CD8-positive, alpha-beta T cell (primary cell): ENCODE measurements at regions of chr1 and their contacts with region 1.

Region 1: DNA sequence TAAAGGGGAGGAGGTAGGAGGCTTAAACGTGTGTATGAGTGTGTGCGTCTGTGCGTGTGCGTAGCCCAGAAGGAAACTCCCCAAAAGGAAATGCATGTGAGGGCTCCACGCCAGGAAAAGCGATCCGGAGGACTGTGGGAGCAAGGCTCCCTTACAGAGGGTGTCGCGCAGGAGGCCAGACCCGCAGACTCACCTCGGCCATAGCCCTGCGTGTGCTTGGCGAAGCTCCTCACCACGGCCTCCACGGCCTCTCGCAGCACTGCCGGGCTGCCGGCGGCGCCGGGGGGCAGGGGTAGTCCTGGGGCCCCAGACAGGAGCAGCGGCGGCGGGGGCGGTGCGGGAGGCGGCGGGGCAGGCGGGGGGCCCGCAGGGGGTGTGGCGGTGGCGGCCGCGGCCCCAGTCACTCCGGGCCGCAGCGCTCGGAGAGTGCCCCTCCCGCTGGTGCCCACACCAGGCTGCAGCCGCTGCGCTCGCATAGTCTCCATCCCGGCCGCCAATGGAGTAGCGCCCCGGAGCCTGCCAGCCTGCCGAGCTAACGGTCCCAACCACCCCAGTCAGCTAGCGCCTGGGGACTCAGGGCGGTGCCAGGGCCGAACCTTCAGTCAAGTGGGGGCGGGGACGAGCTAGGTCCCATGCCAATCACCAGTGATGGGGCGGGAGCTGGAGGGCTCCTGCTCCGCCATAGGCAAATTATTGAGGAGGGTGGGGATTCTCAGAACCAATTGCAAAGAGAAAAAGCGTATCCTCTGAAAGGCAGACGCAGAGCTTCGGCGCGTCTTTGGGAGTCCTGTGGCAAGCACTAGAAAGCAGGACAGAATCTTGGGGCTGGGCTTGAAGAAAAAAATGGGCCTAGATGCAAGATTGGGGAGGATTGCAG is at the start of gene LIX1L:
- DNase-seq: peak; percentile 87 to 98 (median 95)
- ATAC-seq: peak; percentile 85
- H3K4me3 ChIP-seq: peak within 1 kb of the TSS; percentile 51 to 65
- H3K4me3 Mint-ChIP-seq: peak within 1 kb of the TSS; percentile 93
- H3K27ac ChIP-seq: peak within 1 kb of the TSS; percentile 77 to 80
- H3K27ac Mint-ChIP-seq: peak within 1 kb of the TSS; percentile 98
- H3K4me1 ChIP-seq: peaks cover 57% of the 10 kb centered on the region
- H3K4me1 Mint-ChIP-seq: peaks cover 73% of the 10 kb centered on the region
- H3K27me3 ChIP-seq: no peaks in the 10 kb centered on the region
- H3K27me3 Mint-ChIP-seq: no peaks in the 10 kb centered on the region
- CTCF ChIP-seq: no peak
- total RNA-seq, gene LIX1L: 14.7 to 16.4 TPM

Region 2: DNA sequence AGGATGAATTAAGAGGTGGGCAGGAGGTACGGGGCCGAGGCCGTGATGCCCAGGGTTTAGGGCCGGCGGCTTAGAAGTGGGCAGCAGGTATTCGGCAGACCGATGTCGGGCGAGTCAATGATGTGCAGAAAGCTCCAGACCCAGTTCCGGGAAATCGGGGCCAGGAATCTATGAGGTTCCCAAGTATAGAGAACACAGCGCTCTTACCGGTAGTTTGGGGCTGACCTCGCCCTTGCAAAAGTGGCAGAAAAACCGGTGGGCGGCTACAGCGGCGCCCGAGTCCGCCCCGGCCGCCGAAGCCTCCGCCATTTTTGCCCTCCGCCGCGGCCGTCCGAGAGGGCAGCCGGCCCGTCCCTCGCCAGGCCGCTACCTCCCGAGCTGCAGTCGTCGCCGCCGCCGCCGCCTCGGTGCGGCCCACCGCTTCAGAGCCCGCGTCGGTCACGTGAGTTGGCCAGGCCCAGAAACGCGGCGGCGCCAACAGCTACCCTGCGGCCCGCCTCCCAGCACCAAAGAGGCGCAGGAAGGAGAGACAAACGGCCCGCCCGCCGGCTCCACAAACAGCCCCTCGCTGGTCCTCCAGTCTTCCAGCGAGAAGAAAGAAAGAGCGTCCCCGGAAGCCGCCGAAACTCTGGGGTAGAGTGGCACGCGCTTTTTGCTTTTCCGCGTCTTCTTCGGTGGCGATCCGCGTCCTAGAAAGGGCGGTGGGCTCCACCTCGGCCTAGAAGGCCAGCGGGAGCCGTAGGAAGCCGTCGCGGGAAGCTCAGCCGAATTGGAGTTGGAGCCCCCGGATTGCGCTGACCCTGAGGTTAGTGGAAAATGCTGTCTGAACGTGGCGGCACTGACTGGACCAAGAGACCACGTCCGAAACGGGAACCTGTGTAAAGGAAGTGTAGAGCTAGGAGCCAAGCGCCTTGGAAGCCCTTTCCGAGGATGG is 133.8 kb before region 1 on chr1 and contains the starts of genes POLR3C and RNF115:
- CTCF ChIA-PET with region 1: no interaction called
- POLR2A ChIA-PET with region 1: interaction called, 10 read pairs
- intact Hi-C with region 1: no loop called
- DNase-seq: peak; percentile 68 to 94 (median 88)
- ATAC-seq: peak; percentile 93
- H3K4me3 ChIP-seq: peak within 1 kb of the TSS; percentile 93 to 99
- H3K4me3 Mint-ChIP-seq: peak within 1 kb of the TSS; percentile 95
- H3K27ac ChIP-seq: peak within 1 kb of the TSS; percentile 77 to 89
- H3K27ac Mint-ChIP-seq: peak within 1 kb of the TSS; percentile 96
- H3K4me1 ChIP-seq: peaks cover 14% of the 10 kb centered on the region
- H3K4me1 Mint-ChIP-seq: peaks cover 35% of the 10 kb centered on the region
- H3K27me3 ChIP-seq: no peaks in the 10 kb centered on the region
- H3K27me3 Mint-ChIP-seq: no peaks in the 10 kb centered on the region
- CTCF ChIP-seq: no peak
- total RNA-seq, gene POLR3C: 22.1 to 25.8 TPM
- total RNA-seq, gene RNF115: 16.4 TPM

Region 3: GRCh38 chr1:145879775-145880174 is 77.9 kb before region 1 on chr1:
- CTCF ChIA-PET with region 1: no interaction called
- POLR2A ChIA-PET with region 1: no interaction called
- intact Hi-C with region 1: no loop called
- DNase-seq: no peak
- ATAC-seq: no peak
- H3K4me3 ChIP-seq: no peak overlapping the region
- H3K4me3 Mint-ChIP-seq: no peak overlapping the region
- H3K27ac ChIP-seq: no peak overlapping the region
- H3K27ac Mint-ChIP-seq: no peak overlapping the region
- H3K4me1 ChIP-seq: no peaks in the 10 kb centered on the region
- H3K4me1 Mint-ChIP-seq: peaks cover 2% of the 10 kb centered on the region
- H3K27me3 ChIP-seq: peaks cover 0 to 3% of the 10 kb centered on the region in 2 experiments
- H3K27me3 Mint-ChIP-seq: peaks cover 17% of the 10 kb centered on the region
- CTCF ChIP-seq: no peak

Region 4: GRCh38 chr1:145918144-145918992 is 39.3 kb before region 1 on chr1 and contains the start of gene PEX11B:
- CTCF ChIA-PET with region 1: interaction called, 3 read pairs
- POLR2A ChIA-PET with region 1: interaction called, 26 read pairs
- intact Hi-C with region 1: loop called in 1 of 2 experiments (anchors 2 kb)
- DNase-seq: peak; percentile 87 to 96 (median 93)
- ATAC-seq: peak; percentile 91
- H3K4me3 ChIP-seq: peak within 1 kb of the TSS; percentile 88 to 96
- H3K4me3 Mint-ChIP-seq: peak within 1 kb of the TSS; percentile 90
- H3K27ac ChIP-seq: peak within 1 kb of the TSS; percentile 74 to 86
- H3K27ac Mint-ChIP-seq: peak within 1 kb of the TSS; percentile 96
- H3K4me1 ChIP-seq: peaks cover 24% of the 10 kb centered on the region
- H3K4me1 Mint-ChIP-seq: peaks cover 43% of the 10 kb centered on the region
- H3K27me3 ChIP-seq: no peaks in the 10 kb centered on the region
- H3K27me3 Mint-ChIP-seq: no peaks in the 10 kb centered on the region
- CTCF ChIP-seq: no peak
- total RNA-seq, gene PEX11B: 11.8 TPM

Region 5: DNA sequence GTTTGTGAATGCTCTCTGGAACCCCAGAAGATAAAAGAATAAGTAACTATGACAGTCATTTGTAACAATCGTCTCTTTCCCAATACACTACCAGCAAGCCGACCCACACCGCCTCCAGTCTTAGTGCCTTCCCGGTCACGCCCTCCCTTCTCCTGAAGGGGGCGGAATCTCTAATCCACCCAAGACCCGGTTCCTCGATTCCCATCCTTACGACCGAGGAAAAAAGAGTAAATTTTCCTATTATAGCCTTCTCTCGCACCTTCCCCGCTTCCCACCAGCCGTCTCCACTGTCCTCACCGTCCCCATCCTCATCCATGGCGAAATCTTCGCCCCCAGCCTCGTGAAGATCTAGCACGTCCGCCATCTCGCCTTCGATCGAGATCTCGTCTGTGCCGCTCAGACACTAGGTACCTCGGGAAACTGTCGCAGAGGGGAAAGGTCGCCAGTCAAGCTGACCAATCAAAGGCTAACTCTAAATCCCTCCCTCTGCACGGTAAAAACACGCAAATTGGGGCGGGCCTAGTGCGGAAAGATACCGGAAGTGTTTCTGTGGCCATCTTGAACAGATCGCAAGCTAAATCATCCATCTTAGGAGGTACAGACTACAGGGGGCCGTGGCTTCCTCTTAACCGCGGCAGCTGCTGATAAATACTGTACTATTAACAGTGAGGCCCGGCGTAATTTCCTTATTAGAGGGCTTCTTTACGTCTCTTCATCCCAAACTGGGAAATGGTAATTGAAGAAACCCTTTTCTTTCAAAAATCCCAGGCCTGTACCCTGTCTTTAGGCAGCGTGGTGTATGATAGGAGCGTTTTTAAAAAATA is 30.4 kb before region 1 on chr1 and contains the start of gene RBM8A:
- CTCF ChIA-PET with region 1: interaction called, 12 read pairs
- POLR2A ChIA-PET with region 1: interaction called, 63 read pairs
- intact Hi-C with region 1: loop called (anchors 1 kb)
- DNase-seq: peak; percentile 85 to 99 (median 94)
- ATAC-seq: peak; percentile 96
- H3K4me3 ChIP-seq: peak within 1 kb of the TSS; percentile 86 to 91
- H3K4me3 Mint-ChIP-seq: no peak within 1 kb of the TSS
- H3K27ac ChIP-seq: peak within 1 kb of the TSS; percentile 89 to 95
- H3K27ac Mint-ChIP-seq: peak within 1 kb of the TSS; percentile 91
- H3K4me1 ChIP-seq: peaks cover 22% of the 10 kb centered on the region
- H3K4me1 Mint-ChIP-seq: peaks cover 20% of the 10 kb centered on the region
- H3K27me3 ChIP-seq: no peaks in the 10 kb centered on the region
- H3K27me3 Mint-ChIP-seq: no peaks in the 10 kb centered on the region
- CTCF ChIP-seq: peak; percentile 60
- total RNA-seq, gene RBM8A: 180 to 187 TPM

Region 6: GRCh38 chr1:145985502-145986439 is 28.1 kb after region 1 on chr1:
- CTCF ChIA-PET with region 1: interaction called, 3 read pairs
- POLR2A ChIA-PET with region 1: interaction called, 14 read pairs
- intact Hi-C with region 1: no loop called
- DNase-seq: peak in 1 of 9 experiments; percentile 26
- ATAC-seq: no peak
- H3K4me3 ChIP-seq: peak overlapping the region in 1 of 2 experiments; percentile 8
- H3K4me3 Mint-ChIP-seq: peak overlapping the region; percentile 5
- H3K27ac ChIP-seq: peak overlapping the region in 1 of 2 experiments; percentile 34
- H3K27ac Mint-ChIP-seq: peak overlapping the region; percentile 91
- H3K4me1 ChIP-seq: peaks cover 76% of the 10 kb centered on the region
- H3K4me1 Mint-ChIP-seq: peaks cover 61% of the 10 kb centered on the region
- H3K27me3 ChIP-seq: no peaks in the 10 kb centered on the region
- H3K27me3 Mint-ChIP-seq: no peaks in the 10 kb centered on the region
- CTCF ChIP-seq: no peak

Region 7: GRCh38 chr1:146036965-146037646 is 79.4 kb after region 1 on chr1:
- CTCF ChIA-PET with region 1: no interaction called
- POLR2A ChIA-PET with region 1: interaction called, 11 read pairs
- intact Hi-C with region 1: no loop called
- DNase-seq: peak; percentile 51 to 87 (median 70)
- ATAC-seq: peak; percentile 54
- H3K4me3 ChIP-seq: peak overlapping the region; percentile 72 to 94
- H3K4me3 Mint-ChIP-seq: peak overlapping the region; percentile 97
- H3K27ac ChIP-seq: peak overlapping the region; percentile 60 to 63
- H3K27ac Mint-ChIP-seq: peak overlapping the region; percentile 95
- H3K4me1 ChIP-seq: peaks cover 14% of the 10 kb centered on the region
- H3K4me1 Mint-ChIP-seq: peaks cover 29% of the 10 kb centered on the region
- H3K27me3 ChIP-seq: no peaks in the 10 kb centered on the region
- H3K27me3 Mint-ChIP-seq: no peaks in the 10 kb centered on the region
- CTCF ChIP-seq: no peak

Region 8: DNA sequence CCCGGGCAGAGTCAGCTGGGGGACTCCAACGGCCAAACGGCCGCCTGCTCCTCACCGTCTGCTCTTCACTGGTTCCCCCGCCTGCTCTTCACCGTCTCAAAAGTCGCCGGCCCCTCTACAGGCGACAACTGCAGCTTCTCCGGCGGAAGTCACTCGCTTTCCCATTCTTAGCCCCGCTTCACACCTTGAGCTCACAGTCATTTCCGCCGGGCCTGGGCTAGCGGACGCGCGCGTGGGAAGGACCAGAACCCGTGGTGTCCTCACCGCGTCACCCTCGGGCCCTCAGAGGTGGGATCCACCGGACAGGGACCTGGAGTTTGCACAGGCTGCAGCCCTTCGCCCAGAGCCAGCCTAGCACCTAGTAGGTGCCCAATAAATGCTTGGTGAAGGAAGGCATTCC is 91.8 kb after region 1 on chr1:
- CTCF ChIA-PET with region 1: no interaction called
- POLR2A ChIA-PET with region 1: no interaction called
- intact Hi-C with region 1: no loop called
- DNase-seq: peak in 2 of 9 experiments; percentile 23 to 52
- ATAC-seq: no peak
- H3K4me3 ChIP-seq: no peak overlapping the region
- H3K4me3 Mint-ChIP-seq: no peak overlapping the region
- H3K27ac ChIP-seq: no peak overlapping the region
- H3K27ac Mint-ChIP-seq: peak overlapping the region; percentile 49
- H3K4me1 ChIP-seq: no peaks in the 10 kb centered on the region
- H3K4me1 Mint-ChIP-seq: peaks cover 28% of the 10 kb centered on the region
- H3K27me3 ChIP-seq: no peaks in the 10 kb centered on the region
- H3K27me3 Mint-ChIP-seq: no peaks in the 10 kb centered on the region
- CTCF ChIP-seq: no peak